OCI-LY7 (cell line): ENCODE measurements at regions of chr7 and their contacts with region 1.

Region 1: DNA sequence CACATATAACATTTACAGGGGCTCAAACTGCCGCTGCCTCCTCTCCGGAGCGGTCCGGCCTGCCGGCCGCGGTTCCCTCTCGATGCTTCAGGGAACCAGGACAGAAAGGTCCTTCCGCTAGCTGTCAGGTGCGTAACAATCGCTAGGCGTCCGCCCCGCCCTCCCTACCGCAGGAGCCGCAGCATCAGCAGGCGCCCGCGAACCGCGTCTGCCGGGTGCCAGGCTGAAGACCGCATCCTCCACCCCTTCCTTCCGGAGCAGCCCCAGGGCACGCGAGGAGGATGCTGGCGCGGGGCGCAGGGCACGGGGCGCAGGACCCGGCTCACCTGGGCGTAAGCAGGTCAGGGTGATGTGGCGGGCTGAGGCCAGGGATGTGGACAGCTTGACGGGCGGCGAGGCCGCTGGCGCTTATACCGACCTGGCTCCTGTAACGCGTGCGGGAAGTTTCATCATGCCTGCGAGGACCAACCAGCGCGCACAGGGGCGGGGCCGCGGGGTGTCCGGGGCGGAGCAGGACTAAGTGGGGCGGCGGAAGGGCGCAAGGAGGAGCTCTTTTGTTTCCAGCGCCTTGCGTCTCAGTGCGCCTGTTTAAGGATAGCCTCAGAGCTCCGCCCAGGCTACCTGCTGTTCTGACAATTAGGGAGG is at the start of gene ASNS:
- DNase-seq: peak; percentile 95
- H3K4me3 ChIP-seq: peak within 1 kb of the TSS; percentile 97
- H3K27ac ChIP-seq: peak within 1 kb of the TSS; percentile 75
- H3K4me1 ChIP-seq: peaks cover 23% of the 10 kb centered on the region
- CTCF ChIP-seq: no peak
- total RNA-seq, gene ASNS: 109 and 124 TPM in 2 replicates

Region 2: DNA sequence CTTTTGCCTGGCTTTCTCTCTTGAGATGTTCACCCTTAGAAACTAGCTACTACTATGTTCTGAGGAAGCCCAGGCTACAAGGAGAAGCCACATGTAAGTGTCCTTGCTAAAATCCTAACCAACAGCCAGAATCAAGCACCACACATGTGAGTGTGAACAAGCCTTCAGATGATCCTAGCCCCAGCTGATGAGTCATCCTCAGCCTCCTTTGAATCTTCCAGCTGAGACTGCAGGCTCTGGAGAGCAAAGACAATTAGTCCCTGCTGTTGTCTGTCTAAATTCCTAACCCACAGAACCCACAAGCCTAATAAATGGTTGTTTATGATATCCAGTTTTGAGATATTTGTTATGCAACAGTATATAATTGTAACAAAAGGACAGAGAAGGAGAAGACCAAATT is 233.1 kb before region 1 on chr7:
- CTCF ChIA-PET with region 1: no interaction called
- POLR2A ChIA-PET with region 1: no interaction called
- intact Hi-C with region 1: no loop called
- DNase-seq: no peak
- H3K4me3 ChIP-seq: no peak overlapping the region
- H3K27ac ChIP-seq: no peak overlapping the region
- H3K4me1 ChIP-seq: no peaks in the 10 kb centered on the region
- CTCF ChIP-seq: no peak

Region 3: DNA sequence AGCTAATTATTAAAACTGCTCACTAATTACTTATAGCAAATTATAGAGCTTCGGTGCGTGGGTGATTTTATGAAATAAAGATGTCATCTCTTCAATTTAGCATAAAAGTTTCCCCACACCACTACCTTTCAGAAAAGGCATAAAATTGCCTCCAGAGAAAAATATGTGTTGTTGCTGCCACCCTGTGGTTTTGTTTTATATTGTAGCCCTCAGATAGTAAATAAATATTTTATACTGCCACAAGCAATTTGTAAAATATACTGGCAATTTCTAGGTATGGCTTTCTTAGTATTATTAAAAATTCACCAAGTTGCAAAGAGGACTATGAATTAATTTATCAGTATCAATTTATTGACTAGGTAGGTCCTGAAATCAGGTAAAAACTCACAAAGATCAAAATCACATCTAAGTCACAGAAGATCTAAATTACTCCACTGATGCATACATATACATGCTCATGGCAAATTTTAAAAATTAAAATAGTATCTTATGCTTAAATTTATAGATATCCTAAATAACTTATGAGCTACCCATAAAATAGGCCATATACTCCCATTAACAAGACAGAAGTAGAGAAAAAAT is 26.4 kb before region 1 on chr7:
- CTCF ChIA-PET with region 1: no interaction called
- POLR2A ChIA-PET with region 1: interaction called, 10 read pairs
- intact Hi-C with region 1: no loop called
- DNase-seq: peak; percentile 38
- H3K4me3 ChIP-seq: no peak overlapping the region
- H3K27ac ChIP-seq: no peak overlapping the region
- H3K4me1 ChIP-seq: no peaks in the 10 kb centered on the region
- CTCF ChIP-seq: peak; percentile 83

Region 4: DNA sequence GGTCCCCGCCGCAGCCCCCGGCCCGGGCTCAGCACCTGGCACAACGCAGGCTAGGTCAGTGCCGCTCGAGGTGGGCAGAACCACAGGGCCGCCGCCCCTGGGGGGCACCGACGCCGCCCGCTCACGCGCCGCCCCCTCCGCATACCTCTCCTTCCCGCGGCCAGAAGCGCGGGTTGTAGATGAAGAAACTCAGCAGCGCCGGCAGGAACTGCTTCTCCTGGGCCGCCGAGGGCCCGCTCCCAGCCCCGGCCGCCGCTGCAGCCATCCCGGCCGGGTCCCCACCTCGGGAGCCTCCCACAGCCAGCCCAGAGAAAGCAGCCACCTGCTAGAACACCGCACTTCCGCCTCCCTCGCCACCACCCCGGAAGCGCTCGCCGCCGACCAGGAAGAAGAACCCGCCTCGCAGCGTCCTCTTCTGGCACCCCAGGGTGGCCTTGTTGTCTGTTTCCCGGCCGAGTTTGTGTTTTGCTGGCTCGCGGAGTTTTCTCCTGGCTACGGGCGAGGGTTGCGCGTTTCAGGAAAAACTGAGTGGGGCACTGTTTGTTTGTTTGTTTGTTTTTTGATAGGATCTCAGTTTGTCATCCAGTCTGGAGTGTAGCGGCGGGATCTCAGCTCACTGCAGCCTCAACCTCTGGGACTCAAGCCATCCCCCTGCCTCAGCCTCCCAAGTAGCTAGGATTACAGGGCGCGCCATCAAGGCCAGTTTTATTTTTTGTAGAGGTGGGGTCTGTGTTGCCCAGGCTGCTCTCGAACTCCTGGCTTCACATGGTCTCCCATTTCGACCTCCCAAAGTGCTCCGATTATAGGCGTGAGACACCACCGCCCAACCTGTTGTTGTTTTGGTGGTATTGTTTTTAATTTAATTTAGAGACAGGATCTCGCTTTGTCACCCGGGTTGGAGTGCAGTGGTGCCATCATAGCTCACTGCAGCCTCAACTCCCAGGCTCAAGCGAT is 100.1 kb after region 1 on chr7:
- CTCF ChIA-PET with region 1: interaction called, 3 read pairs
- POLR2A ChIA-PET with region 1: interaction called, 4 read pairs
- intact Hi-C with region 1: loop called (anchors 5 kb)
- DNase-seq: peak; percentile 88
- H3K4me3 ChIP-seq: peak overlapping the region; percentile 94
- H3K27ac ChIP-seq: peak overlapping the region; percentile 65
- H3K4me1 ChIP-seq: peaks cover 12% of the 10 kb centered on the region
- CTCF ChIP-seq: peak; percentile 71